Sigmoid colon (tissue), 7 donors: ENCODE measurements at regions of chr17 and their contacts with region 1.

Region 1: DNA sequence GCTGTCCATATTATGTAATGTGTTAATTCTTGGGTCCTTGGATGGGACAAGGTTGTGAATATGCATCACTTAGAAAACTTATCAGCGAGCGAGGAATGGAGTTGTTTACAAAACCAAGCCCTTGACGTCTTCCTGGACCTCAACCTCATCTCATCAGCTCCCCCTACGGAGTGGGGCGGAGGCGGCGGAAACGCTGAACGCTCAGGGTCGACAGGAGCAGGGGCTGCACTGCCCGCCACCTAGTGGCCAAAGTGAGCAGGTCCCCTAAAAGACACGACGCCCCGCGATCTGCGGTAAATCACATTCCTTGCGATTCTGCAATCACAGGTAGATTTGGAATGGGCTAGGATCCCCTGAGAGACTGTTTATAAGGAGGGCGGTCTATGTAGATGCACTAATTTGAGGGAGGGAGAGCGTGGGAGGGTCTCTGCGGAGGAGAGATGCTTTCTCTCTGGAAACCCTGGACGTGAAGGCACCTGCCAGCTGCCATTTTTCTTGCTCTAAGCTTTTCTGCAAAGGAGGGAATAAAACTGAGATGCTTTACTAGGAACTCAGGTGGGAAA is 5.4 kb upstream of the ICAM2 start:
- DNase-seq: peak; percentile 84
- H3K4me3 ChIP-seq: peak overlapping the region in 1 of 4 donors; percentile 1
- H3K27ac ChIP-seq: no peak overlapping the region
- H3K4me1 ChIP-seq: peaks cover 0 to 7% (median 6%) of the 10 kb centered on the region in 4 donors
- H3K27me3 ChIP-seq: peaks cover 0 to 4% (median 0%) of the 10 kb centered on the region in 3 donors
- CTCF ChIP-seq: peak; percentile 68 to 95 (median 86)
- EP300 ChIP-seq: no peak
- POLR2A ChIP-seq: no peak

Region 2: GRCh38 chr17:63919311-63919723 is 106.5 kb before region 1 on chr17:
- intact Hi-C with region 1: loop called (anchors 2 kb)
- DNase-seq: peak; percentile 75
- H3K4me3 ChIP-seq: no peak overlapping the region
- H3K27ac ChIP-seq: no peak overlapping the region
- H3K4me1 ChIP-seq: no peaks in the 10 kb centered on the region
- H3K27me3 ChIP-seq: peaks cover 0 to 6% (median 0%) of the 10 kb centered on the region in 3 donors
- CTCF ChIP-seq: peak; percentile 74 to 94 (median 90)
- EP300 ChIP-seq: no peak
- POLR2A ChIP-seq: no peak

Region 3: GRCh38 chr17:64129764-64130558 is 104.1 kb after region 1 on chr17 and contains the start of gene ERN1:
- intact Hi-C with region 1: loop called (anchors 2 kb)
- DNase-seq: peak; percentile 97
- H3K4me3 ChIP-seq: peak within 1 kb of the TSS; percentile 52 to 92 (median 79)
- H3K27ac ChIP-seq: peak within 1 kb of the TSS; percentile 96 to 99 (median 98)
- H3K4me1 ChIP-seq: peaks cover 0 to 32% (median 20%) of the 10 kb centered on the region in 4 donors
- H3K27me3 ChIP-seq: no peaks in the 10 kb centered on the region
- CTCF ChIP-seq: no peak
- EP300 ChIP-seq: no peak
- POLR2A ChIP-seq: peak; percentile 34 to 60
- total RNA-seq, gene ERN1: 7.1 to 9.4 (median 8.2) TPM

Region 4: GRCh38 chr17:64281962-64282727 is 256.3 kb after region 1 on chr17:
- intact Hi-C with region 1: loop called (anchors 5 kb)
- DNase-seq: peak; percentile 82
- H3K4me3 ChIP-seq: no peak overlapping the region
- H3K27ac ChIP-seq: no peak overlapping the region
- H3K4me1 ChIP-seq: peaks cover 0 to 16% (median 9%) of the 10 kb centered on the region in 4 donors
- H3K27me3 ChIP-seq: no peaks in the 10 kb centered on the region
- CTCF ChIP-seq: peak; percentile 59 to 71 (median 64)
- EP300 ChIP-seq: no peak
- POLR2A ChIP-seq: no peak